GM13977 (cell line): ENCODE measurements at regions of chr17 and their contacts with region 1.

Region 1: DNA sequence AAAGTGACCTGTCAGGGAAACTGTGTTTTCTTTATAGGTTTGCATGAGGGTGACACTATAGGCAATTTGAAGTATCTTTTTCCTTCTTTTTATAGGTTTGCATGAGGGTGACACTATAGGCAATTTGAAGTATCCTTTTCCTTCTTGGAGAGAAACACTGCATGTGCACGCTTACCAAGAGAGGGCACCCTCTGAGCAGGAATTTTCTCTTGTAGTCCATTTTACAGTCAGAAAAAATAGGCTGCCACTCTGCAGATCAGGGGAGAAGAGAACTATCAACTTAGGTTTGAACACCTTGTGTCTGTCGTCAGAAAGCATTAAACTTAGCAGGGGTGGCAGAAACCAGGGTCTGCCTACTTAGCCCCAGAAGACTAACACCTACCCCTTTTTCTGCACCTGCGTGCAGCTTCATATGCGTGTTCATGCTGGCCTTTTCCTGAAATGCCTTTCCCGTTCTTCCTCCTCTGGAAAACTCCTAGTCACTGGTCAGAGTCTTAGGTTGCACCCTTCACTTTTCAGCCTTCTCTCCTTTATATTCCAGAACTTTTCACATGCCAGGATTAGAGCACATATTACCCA is 16.4 kb upstream of the SMIM36 start:
- DNase-seq: peak; percentile 36
- CTCF ChIP-seq: peak; percentile 62

Region 2: GRCh38 chr17:55717898-55718735 is 190.5 kb after region 1 on chr17:
- in situ Hi-C with region 1: loop called (anchors 10 kb)
- DNase-seq: peak; percentile 10
- CTCF ChIP-seq: peak; percentile 75

Region 3: GRCh38 chr17:55770148-55770870 is 242.7 kb after region 1 on chr17:
- in situ Hi-C with region 1: no loop called
- DNase-seq: peak; percentile 48
- CTCF ChIP-seq: peak; percentile 45